CD4-positive, alpha-beta T cell (primary cell): ENCODE measurements at regions of chr10 and their contacts with region 1.

Region 1: DNA sequence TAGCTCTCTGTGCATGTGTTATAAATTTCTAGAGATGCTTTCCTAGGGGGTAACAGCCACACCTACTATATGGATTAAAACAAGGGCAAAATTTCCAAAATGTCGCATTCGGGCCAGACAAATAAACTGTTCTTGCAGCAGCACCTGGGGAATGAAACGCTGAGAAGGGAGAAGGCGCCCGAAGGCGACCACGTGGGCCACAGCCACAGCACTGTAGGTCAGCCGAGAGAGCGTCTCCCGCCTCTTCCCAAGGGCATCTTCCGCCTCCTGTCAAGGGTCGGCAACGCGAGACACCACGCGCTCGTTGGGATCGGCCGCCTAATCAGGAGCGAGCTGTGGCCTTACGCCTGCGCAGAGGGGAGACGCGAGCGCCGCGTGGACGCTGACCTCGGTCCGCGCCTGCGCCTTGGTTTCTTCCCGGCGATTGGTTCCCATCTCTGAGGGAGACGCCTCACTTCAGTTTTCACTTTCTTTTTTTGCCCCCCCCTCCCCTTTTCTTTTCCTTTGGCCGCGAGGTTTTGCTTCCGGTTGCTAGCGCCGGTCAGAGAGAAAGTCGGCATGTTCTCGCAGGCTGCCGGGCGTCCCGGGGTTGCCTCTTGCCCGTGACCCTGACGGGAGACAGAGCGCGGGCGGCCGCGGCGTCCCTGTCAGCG is at the start of gene TASOR2:
- DNase-seq: peak; percentile 87 to 98 (median 96)
- ATAC-seq: peak; percentile 82
- H3K4me3 ChIP-seq: peak within 1 kb of the TSS; percentile 71
- H3K4me3 Mint-ChIP-seq: peak within 1 kb of the TSS; percentile 98
- H3K27ac ChIP-seq: peak within 1 kb of the TSS; percentile 81 to 98
- H3K27ac Mint-ChIP-seq: peak within 1 kb of the TSS; percentile 98
- H3K4me1 ChIP-seq: peaks cover 27% of the 10 kb centered on the region
- H3K4me1 Mint-ChIP-seq: peaks cover 50% of the 10 kb centered on the region
- H3K27me3 ChIP-seq: no peaks in the 10 kb centered on the region
- H3K27me3 Mint-ChIP-seq: peaks cover 5% of the 10 kb centered on the region
- CTCF ChIP-seq: no peak
- total RNA-seq, gene TASOR2: 50.0 to 51.0 TPM

Region 2: DNA sequence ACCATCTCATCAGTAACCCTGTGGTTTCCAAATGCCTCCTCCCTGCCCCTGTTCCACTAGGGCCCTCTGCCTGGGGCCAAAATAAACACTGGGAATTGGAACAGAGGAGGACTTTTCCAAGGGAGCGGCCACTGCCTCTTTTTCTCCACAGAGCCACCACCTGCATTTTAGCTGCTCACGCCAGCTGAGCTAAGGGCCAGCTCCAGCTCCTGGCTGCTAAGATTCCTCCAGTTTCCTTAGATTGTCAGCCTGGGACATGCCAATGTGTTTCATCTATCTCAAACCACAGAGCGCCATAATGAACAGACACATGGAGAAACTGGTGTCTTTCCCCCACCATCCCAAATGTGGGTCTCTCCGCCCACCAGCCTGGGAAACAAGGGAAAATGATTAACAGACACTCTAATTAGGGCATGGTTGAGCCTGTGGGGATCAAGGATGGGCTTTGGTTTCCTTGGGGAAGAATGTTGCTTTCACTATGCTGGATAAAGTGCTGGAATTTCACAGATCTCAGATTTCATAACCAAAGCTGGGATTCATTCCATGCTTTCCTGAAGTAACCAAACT is 70.2 kb before region 1 on chr10:
- CTCF ChIA-PET with region 1: no interaction called
- POLR2A ChIA-PET with region 1: no interaction called
- intact Hi-C with region 1: no loop called
- DNase-seq: no peak
- ATAC-seq: no peak
- H3K4me3 ChIP-seq: no peak overlapping the region
- H3K4me3 Mint-ChIP-seq: no peak overlapping the region
- H3K27ac ChIP-seq: no peak overlapping the region
- H3K27ac Mint-ChIP-seq: no peak overlapping the region
- H3K4me1 ChIP-seq: no peaks in the 10 kb centered on the region
- H3K4me1 Mint-ChIP-seq: no peaks in the 10 kb centered on the region
- H3K27me3 ChIP-seq: no peaks in the 10 kb centered on the region
- H3K27me3 Mint-ChIP-seq: no peaks in the 10 kb centered on the region
- CTCF ChIP-seq: no peak

Region 3: DNA sequence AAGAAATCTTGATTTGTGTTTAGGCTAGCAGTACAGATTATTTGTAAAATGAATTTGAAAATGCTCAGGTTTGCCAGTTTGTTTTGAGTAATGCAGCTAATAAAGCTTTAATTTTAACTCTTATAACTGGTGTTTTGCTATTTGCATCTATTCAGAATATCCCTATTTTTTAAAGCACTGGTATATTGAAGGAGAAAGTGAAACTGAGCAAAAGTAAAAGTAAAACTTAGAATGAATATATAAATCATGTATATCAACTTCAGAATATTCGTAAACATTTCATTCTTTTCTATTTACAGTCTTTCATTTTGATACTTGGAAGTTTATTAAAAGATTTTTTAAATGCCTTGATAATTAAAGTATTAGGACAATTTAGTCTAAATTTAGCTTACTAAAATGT is 26.4 kb after region 1 on chr10:
- CTCF ChIA-PET with region 1: no interaction called
- POLR2A ChIA-PET with region 1: interaction called, 7 read pairs
- intact Hi-C with region 1: loop called in 1 of 2 experiments (anchors 2 kb)
- DNase-seq: peak in 2 of 14 experiments; percentile 10 to 49
- ATAC-seq: no peak
- H3K4me3 ChIP-seq: peak overlapping the region; percentile 41
- H3K4me3 Mint-ChIP-seq: peak overlapping the region; percentile 84
- H3K27ac ChIP-seq: no peak overlapping the region
- H3K27ac Mint-ChIP-seq: peak overlapping the region; percentile 57
- H3K4me1 ChIP-seq: peaks cover 7% of the 10 kb centered on the region
- H3K4me1 Mint-ChIP-seq: peaks cover 88% of the 10 kb centered on the region
- H3K27me3 ChIP-seq: no peaks in the 10 kb centered on the region
- H3K27me3 Mint-ChIP-seq: no peaks in the 10 kb centered on the region
- CTCF ChIP-seq: no peak

Region 4: GRCh38 chr10:5813287-5814109 is 129.1 kb after region 1 on chr10 and contains the start of gene GDI2:
- CTCF ChIA-PET with region 1: no interaction called
- POLR2A ChIA-PET with region 1: interaction called, 10 read pairs
- intact Hi-C with region 1: loop called (anchors 1 to 2 kb)
- DNase-seq: peak; percentile 92 to 98 (median 96)
- ATAC-seq: peak; percentile 94
- H3K4me3 ChIP-seq: peak within 1 kb of the TSS; percentile 74
- H3K4me3 Mint-ChIP-seq: peak within 1 kb of the TSS; percentile 95
- H3K27ac ChIP-seq: peak within 1 kb of the TSS; percentile 92 to 97
- H3K27ac Mint-ChIP-seq: peak within 1 kb of the TSS; percentile 89
- H3K4me1 ChIP-seq: peaks cover 42% of the 10 kb centered on the region
- H3K4me1 Mint-ChIP-seq: peaks cover 60% of the 10 kb centered on the region
- H3K27me3 ChIP-seq: no peaks in the 10 kb centered on the region
- H3K27me3 Mint-ChIP-seq: no peaks in the 10 kb centered on the region
- CTCF ChIP-seq: no peak
- total RNA-seq, gene GDI2: 78.1 to 82.3 TPM